Cardiac septum (tissue), 1 donor: ENCODE measurements at regions of chr1 and their contacts with region 1.

Region 1: GRCh38 chr1:115364046-115364775 is 26.2 kb upstream of the NGF start:
- DNase-seq: no peak

Region 2: GRCh38 chr1:115409097-115410015 is 45.1 kb after region 1 on chr1:
- intact Hi-C with region 1: loop called (anchors 2 kb)
- DNase-seq: peak; percentile 74

Region 3: DNA sequence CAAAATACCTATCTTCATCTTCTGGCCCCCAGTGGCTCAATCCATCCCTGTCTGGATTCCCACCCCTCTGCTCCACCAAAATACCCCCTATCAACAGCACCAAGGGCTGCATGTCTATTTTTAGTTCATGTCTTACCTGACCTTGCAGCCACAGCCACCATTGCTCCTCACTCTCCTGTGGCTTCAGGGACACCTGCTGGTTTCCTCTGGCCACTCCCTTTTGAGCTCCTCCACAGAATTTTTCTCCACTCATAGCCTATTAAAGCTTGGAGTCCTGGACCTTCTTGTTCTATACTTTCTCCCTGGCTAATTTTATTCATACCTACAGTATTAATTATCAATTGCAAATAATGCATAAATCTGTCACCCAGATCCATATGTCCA is 99.1 kb after region 1 on chr1:
- intact Hi-C with region 1: loop called (anchors 5 kb)
- DNase-seq: no peak